Dorsolateral prefrontal cortex (tissue), 120 donors: ENCODE measurements at regions of chr7 and their contacts with region 1.

Region 1: GRCh38 chr7:12328888-12329770 is 74.5 kb downstream of the VWDE start:
- DNase-seq: no peak
- H3K4me3 ChIP-seq: no peak overlapping the region
- H3K27ac ChIP-seq: no peak overlapping the region
- H3K27me3 ChIP-seq: no peaks in the 10 kb centered on the region
- CTCF ChIP-seq: no peak

Region 2: DNA sequence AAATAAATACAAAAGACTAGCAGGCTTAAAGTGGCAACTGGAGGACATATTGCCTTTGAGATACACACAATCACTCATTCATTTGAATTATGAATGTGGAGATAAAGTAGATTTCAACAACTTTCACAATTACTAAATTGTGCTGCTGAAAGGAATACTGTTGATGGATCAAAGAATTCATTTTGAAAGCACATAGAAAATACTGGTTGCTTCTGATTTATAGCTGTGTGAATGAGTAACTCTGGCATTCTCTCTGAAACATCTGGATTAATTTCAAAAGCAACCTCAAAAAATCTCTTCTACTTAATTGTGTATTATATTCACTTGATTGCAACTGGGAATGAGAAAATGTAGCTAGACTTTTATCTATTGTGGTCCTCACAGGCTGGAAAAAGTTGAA is 894.8 kb before region 1 on chr7:
- intact Hi-C with region 1: loop called (anchors 5 kb)
- DNase-seq: no peak
- H3K4me3 ChIP-seq: no peak overlapping the region
- H3K27ac ChIP-seq: no peak overlapping the region
- H3K27me3 ChIP-seq: no peaks in the 10 kb centered on the region
- CTCF ChIP-seq: no peak

Region 3: DNA sequence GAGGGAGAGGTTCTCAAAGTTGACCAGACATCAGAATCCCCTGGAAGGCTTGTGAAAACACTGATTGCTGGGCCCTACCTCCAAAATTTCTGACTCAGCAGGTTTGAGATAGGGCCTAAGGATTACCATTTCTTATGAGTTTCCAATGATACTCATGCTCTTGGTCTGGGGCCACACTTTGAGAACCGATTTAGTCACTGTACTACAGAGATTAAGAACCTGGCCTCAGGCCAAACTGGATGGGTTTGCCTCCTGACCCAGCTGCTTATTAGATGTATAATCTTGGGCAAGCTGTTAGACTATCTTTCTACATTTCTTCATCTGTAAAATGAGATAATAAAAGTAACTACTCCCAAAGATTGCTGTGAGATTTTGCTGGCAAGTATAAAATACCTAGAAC is 164.3 kb after region 1 on chr7:
- intact Hi-C with region 1: no loop called
- DNase-seq: no peak
- H3K4me3 ChIP-seq: no peak overlapping the region
- H3K27ac ChIP-seq: no peak overlapping the region
- H3K27me3 ChIP-seq: peaks cover 0 to 5% (median 0%) of the 10 kb centered on the region in 45 donors
- CTCF ChIP-seq: no peak